ENCODE measurements at regions of chr1 and their contacts with region 1.

Region 1: GRCh38 chr1:6148497-6149241 is 31.5 kb downstream of the CHD5 start:
- DNase-seq: peak; percentile 33
- H3K4me3 ChIP-seq: no peak overlapping the region
- H3K27ac ChIP-seq: no peak overlapping the region
- H3K4me1 ChIP-seq: no peaks in the 10 kb centered on the region
- H3K27me3 ChIP-seq: peaks cover 0 to 2% of the 10 kb centered on the region in 2 experiments
- CTCF ChIP-seq: no peak
- POLR2A ChIP-seq: no peak

Region 2: GRCh38 chr1:6127587-6128163 is 21.0 kb before region 1 on chr1:
- CTCF ChIA-PET with region 1: no interaction called
- POLR2A ChIA-PET with region 1: no interaction called
- dilution Hi-C with region 1: no loop called
- intact Hi-C with region 1: loop called (anchors 1 kb)
- DNase-seq: peak; percentile 56
- H3K4me3 ChIP-seq: no peak overlapping the region
- H3K27ac ChIP-seq: no peak overlapping the region
- H3K4me1 ChIP-seq: no peaks in the 10 kb centered on the region
- H3K27me3 ChIP-seq: no peaks in the 10 kb centered on the region
- CTCF ChIP-seq: no peak
- POLR2A ChIP-seq: no peak